HCT116 (cell line): ENCODE measurements at regions of chr7 and their contacts with region 1.

Region 1: DNA sequence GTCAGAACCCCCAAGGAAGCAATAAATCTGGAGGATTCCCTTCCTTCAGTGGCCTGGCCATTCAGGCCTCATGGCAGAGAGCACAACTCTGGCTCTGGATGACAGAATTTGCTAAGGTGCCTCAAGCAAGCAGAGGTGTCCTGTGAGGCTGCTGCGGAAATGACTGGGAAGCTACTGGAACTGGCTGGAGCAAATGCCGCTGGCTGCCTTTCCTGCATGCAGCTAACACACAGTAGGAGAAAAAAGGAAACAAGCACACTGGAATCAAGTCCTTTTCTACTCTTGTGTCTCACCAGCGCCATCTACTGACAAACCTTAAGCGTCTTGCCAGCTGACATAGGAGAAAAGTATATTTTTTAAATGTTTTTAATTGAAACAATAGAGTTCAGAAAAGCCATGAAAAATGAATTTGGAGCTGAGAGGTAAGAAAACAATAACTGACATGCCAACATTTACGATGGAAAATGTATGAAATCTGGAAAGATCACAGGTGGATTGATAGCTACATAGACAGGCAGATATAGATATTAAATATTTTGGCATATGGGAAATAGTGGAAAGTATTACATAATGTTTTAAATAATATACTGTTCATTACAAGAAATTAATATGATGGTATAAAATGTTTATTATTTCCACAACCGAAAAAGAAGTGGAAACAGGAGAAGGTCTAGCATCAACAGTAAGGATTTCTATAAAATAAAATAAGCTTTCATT is 951.6 kb downstream of the ANKRD7 start:
- DNase-seq: peak; percentile 83
- ATAC-seq: peak; percentile 88
- H3K4me3 ChIP-seq: no peak overlapping the region
- H3K27ac ChIP-seq: no peak overlapping the region
- H3K4me1 ChIP-seq: no peaks in the 10 kb centered on the region
- H3K27me3 ChIP-seq: no peaks in the 10 kb centered on the region
- CTCF ChIP-seq: peak; percentile 68 to 83 (median 80); a peak in 5 of 6 replicates
- POLR2A ChIP-seq: no peak
- RAD21 ChIP-seq: peak; percentile 84

Region 2: DNA sequence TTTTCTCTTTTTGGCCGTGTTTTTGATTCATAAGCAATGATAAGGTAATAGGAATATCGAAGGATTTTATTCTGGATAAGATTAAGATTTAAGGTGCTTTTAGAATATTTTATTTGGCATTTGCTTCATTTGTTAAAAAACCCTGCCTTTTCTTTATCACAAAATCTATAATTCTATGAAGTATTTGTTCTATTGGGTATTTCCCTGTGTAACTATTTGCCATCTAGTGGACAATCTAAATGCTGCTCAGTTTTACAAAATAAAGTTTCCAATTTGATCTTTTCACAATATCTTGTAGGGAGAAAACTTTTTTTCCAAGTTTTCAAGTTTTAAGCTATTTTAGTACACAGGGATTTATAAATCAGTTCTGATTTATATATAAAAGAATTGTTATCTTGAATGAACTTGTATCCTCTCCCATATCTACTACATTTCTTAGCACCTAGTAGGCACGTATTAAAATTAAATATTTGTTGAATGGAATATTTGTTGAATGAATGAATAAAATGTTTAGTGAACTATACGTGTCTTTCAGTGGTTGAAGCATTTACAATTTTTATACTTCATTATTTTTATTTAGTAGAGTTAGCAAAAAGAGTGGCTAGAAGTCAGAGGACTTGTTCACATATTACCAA is 925.1 kb before region 1 on chr7:
- CTCF ChIA-PET with region 1: no interaction called
- POLR2A ChIA-PET with region 1: no interaction called
- RAD21 ChIA-PET with region 1: no interaction called
- intact Hi-C with region 1: loop called (anchors 10 kb)
- DNase-seq: no peak
- ATAC-seq: no peak
- H3K4me3 ChIP-seq: no peak overlapping the region
- H3K27ac ChIP-seq: no peak overlapping the region
- H3K4me1 ChIP-seq: no peaks in the 10 kb centered on the region
- H3K27me3 ChIP-seq: no peaks in the 10 kb centered on the region
- CTCF ChIP-seq: peak; percentile 15 to 62 (median 53); a peak in 5 of 6 replicates
- POLR2A ChIP-seq: no peak
- RAD21 ChIP-seq: peak; percentile 34

Region 3: DNA sequence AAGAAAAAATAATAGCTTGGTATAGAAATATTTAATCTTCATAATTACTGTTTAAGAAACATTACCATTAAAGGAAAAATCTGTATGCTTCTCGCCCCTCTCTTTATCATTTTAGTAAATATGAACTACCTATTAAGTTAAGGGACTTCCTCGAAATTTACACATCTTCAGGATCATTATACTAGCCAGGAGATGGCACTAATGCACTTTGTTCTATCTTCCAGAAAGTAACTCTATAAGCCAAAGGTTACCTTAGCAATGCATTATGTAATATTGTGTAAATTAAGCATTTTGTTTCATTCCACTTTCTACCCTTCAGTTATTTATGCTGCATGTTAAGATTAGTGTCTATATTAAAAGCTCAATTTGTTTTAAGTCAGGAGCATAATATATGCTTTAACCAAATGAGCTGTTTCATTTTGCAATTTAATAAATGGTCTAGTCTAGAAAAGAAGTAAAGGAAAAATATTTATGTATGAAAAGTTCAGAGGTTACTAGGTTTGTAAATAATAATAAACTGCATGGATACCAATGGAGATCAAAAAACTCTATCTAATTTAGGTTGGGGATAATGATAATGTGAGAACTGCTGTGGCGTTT is 823.1 kb before region 1 on chr7:
- CTCF ChIA-PET with region 1: interaction called, 8 read pairs
- POLR2A ChIA-PET with region 1: no interaction called
- RAD21 ChIA-PET with region 1: no interaction called
- intact Hi-C with region 1: loop called (anchors 1 kb)
- DNase-seq: peak; percentile 52
- ATAC-seq: peak; percentile 74
- H3K4me3 ChIP-seq: no peak overlapping the region
- H3K27ac ChIP-seq: no peak overlapping the region
- H3K4me1 ChIP-seq: no peaks in the 10 kb centered on the region
- H3K27me3 ChIP-seq: no peaks in the 10 kb centered on the region
- CTCF ChIP-seq: peak; percentile 27 to 60 (median 41); a peak in 4 of 6 replicates
- POLR2A ChIP-seq: no peak
- RAD21 ChIP-seq: peak; percentile 80

Region 4: DNA sequence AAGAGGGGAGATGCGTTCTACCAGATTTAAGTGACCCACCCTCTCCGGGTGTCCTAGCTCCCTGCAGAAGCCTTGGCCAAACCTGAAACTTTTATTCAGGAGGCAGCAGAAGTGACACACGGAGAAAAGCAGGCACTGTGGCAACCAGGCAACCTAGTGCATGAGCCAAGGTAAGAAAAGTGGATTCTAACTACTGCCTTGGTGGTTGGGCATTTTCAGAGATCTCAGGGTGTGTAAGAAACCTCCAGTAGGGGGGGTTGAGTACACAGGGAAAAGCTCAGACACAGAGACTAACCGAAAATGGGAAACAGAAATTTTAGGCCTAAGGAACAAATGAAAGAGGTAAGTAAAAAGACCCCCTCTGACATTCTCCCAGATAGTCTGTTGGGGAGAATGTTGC is 305.9 kb before region 1 on chr7:
- CTCF ChIA-PET with region 1: interaction called, 5 read pairs
- POLR2A ChIA-PET with region 1: no interaction called
- RAD21 ChIA-PET with region 1: no interaction called
- intact Hi-C with region 1: loop called (anchors 1 kb)
- DNase-seq: peak; percentile 12
- ATAC-seq: peak; percentile 71
- H3K4me3 ChIP-seq: no peak overlapping the region
- H3K27ac ChIP-seq: no peak overlapping the region
- H3K4me1 ChIP-seq: peaks cover 0 to 9% of the 10 kb centered on the region in 2 experiments; a peak in 2 of 4 replicates
- H3K27me3 ChIP-seq: no peaks in the 10 kb centered on the region
- CTCF ChIP-seq: peak in 2 of 3 experiments; percentile 52 to 55; a peak in 4 of 6 replicates
- POLR2A ChIP-seq: no peak
- RAD21 ChIP-seq: peak; percentile 50